Activated T-helper 1 cell treated with anti-CD3 and anti-CD28 coated beads, Interleukin-12 subunit alpha, Interleukin-12 subunit beta, Interleukin-2, Interleukin-4 antibody, amounts not matched to agents 30 ng/mL and 10 ng/mL and 1 ng/mL, durations not matched to agents 14 hours and 24 hours and 36 hours (primary cell): ENCODE measurements at regions of chr15 and their contacts with region 1.

Region 1: GRCh38 chr15:35206060-35206675 is 121.1 kb upstream of the NANOGP8 start:
- DNase-seq: no peak
- H3K4me3 Mint-ChIP-seq: no peak overlapping the region
- H3K27ac Mint-ChIP-seq: no peak overlapping the region
- H3K4me1 Mint-ChIP-seq: no peaks in the 10 kb centered on the region
- H3K27me3 Mint-ChIP-seq: peaks cover 1% of the 10 kb centered on the region

Region 2: DNA sequence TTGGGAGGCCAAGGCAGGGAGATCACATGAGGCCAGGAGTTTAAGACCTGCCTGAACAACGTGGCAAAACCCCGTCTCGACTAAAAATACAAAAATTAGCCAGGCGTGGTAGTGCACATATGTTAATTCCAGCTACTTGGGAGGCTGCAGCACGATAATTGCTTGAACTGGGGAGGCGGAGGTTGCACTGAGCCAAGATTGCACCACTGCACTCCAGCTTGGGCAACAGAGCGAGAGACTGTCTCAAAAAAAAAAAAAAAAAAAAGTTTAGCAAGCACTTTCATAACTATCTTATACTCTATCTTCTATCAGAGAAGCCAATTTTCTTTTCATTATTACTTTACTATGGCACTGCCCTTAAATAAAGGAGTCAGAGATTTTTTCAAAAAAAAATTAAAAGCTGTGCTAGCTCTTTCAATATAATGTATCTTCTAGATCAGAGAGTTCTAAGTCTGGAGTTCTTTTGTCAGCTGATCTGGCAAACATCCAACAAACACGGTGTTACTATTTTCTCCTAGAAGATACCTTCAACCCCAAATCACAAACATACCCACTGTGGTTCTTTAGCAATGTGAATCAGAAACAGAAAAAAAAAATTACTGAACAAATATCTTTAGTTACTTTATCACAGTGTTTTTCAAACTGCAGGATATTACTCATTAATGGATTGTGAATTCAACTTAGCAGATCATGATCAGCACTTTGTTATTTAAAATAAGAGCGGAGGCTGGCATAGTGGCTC is 221.1 kb before region 1 on chr15:
- intact Hi-C with region 1: no loop called
- DNase-seq: no peak
- H3K4me3 Mint-ChIP-seq: peak overlapping the region; percentile 55
- H3K27ac Mint-ChIP-seq: no peak overlapping the region
- H3K4me1 Mint-ChIP-seq: peaks cover 45% of the 10 kb centered on the region
- H3K27me3 Mint-ChIP-seq: no peaks in the 10 kb centered on the region

Region 3: DNA sequence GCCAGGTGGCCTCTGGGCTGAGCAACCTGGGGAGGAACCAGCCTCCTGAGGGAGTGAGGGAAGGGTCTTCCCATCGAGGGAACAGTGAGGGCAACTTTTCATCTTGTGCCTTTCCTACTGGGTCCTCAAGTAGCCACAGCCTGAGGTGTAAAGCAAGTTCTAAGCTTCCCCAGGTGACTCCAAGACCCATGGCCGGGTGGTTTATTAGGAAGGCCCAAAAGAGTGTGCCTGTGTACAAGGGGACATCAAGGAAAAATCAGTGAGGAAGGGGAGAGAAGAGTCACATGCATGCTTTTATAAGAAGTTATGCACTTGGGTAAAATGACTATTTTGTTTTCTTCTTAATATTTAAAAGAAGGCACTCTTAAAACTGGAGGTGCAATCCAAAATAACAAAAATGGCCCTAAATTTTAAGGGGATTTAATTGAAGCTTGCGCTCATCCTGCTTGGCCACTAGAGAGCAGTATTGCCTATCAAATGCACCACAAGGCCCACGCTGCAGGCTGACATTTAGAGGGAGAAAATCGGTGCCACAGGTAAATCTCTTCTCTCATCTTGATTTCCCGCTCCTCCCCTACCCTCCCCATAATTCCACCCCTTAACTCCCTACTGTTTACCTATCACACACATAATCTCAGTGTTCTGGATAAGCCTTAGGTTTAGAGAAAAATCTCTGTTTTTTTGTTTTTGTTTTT is 127.8 kb before region 1 on chr15:
- intact Hi-C with region 1: loop called (anchors 1 kb)
- DNase-seq: peak; percentile 4
- H3K4me3 Mint-ChIP-seq: no peak overlapping the region
- H3K27ac Mint-ChIP-seq: no peak overlapping the region
- H3K4me1 Mint-ChIP-seq: no peaks in the 10 kb centered on the region
- H3K27me3 Mint-ChIP-seq: no peaks in the 10 kb centered on the region